Right cardiac atrium (tissue), 5 donors: ENCODE measurements at regions of chr20 and their contacts with region 1.

Region 1: GRCh38 chr20:59782986-59783640 is 150.3 kb downstream of the SYCP2 start:
- DNase-seq: peak; percentile 49 to 84 (median 77)
- ATAC-seq: peak in 1 of 2 donors; percentile 58
- H3K4me3 ChIP-seq: no peak overlapping the region
- H3K27ac ChIP-seq: no peak overlapping the region
- H3K4me1 ChIP-seq: no peaks in the 10 kb centered on the region
- H3K27me3 ChIP-seq: no peaks in the 10 kb centered on the region

Region 2: GRCh38 chr20:59386809-59387208 is 396.3 kb before region 1 on chr20:
- intact Hi-C with region 1: no loop called
- DNase-seq: no peak
- ATAC-seq: no peak
- H3K4me3 ChIP-seq: no peak overlapping the region
- H3K27ac ChIP-seq: no peak overlapping the region
- H3K4me1 ChIP-seq: no peaks in the 10 kb centered on the region
- H3K27me3 ChIP-seq: no peaks in the 10 kb centered on the region

Region 3: DNA sequence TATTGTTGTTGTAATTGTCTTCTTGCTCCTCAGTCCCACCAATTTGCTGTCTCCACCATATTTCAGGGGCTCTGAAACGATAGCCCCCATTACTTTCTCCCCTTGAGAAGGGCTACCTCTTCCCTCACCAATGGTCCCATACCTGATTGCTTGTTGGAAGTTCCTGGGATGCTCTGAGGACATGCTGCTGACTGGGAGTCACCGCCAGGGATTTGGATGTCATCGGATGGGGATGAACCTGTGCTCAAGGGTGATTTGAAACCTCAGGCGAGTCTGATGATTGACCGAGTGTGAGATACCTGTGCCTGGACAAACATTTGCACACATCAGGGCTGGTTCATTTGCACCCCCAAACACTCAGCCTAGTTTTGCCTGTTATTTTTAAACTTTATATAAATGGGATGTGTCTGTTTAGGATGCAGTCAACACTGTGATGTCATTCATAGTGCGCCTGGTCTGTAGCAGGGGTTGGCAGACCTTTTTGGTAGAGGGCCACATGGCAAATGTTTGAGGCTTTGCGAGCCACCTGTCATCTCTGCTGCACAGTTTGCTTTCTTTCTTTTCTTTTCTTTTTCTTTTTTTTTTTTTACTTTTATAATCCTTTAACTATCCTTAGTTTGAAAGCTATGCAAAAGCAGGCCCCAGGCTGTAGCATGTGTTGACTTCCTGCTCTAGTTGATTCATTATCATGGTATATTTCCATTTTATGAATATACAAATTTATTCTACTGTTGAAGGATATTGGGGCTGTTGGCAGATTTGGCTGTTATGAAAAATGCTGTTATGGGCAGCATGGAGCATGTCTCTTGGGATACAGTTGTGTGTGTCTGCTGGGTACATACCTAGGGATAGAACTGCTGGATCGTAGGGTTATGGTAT is 297.3 kb before region 1 on chr20:
- intact Hi-C with region 1: no loop called
- DNase-seq: no peak
- ATAC-seq: no peak
- H3K4me3 ChIP-seq: no peak overlapping the region
- H3K27ac ChIP-seq: no peak overlapping the region
- H3K4me1 ChIP-seq: no peaks in the 10 kb centered on the region
- H3K27me3 ChIP-seq: no peaks in the 10 kb centered on the region

Region 4: GRCh38 chr20:59835448-59836395 is 52.6 kb after region 1 on chr20:
- intact Hi-C with region 1: loop called in 1 of 4 experiments (anchors 5 kb)
- DNase-seq: peak; percentile 58 to 85 (median 84)
- ATAC-seq: peak; percentile 88 to 90
- H3K4me3 ChIP-seq: peak overlapping the region; percentile 26
- H3K27ac ChIP-seq: peak overlapping the region; percentile 63
- H3K4me1 ChIP-seq: peaks cover 4% of the 10 kb centered on the region
- H3K27me3 ChIP-seq: no peaks in the 10 kb centered on the region

Region 5: GRCh38 chr20:59850018-59850641 is 67.0 kb after region 1 on chr20:
- intact Hi-C with region 1: loop called (anchors 2 to 5 kb)
- DNase-seq: no peak
- ATAC-seq: no peak
- H3K4me3 ChIP-seq: no peak overlapping the region
- H3K27ac ChIP-seq: no peak overlapping the region
- H3K4me1 ChIP-seq: no peaks in the 10 kb centered on the region
- H3K27me3 ChIP-seq: no peaks in the 10 kb centered on the region